Gastrocnemius medialis (tissue), 4 donors: ENCODE measurements at regions of chr22 and their contacts with region 1.

Region 1: DNA sequence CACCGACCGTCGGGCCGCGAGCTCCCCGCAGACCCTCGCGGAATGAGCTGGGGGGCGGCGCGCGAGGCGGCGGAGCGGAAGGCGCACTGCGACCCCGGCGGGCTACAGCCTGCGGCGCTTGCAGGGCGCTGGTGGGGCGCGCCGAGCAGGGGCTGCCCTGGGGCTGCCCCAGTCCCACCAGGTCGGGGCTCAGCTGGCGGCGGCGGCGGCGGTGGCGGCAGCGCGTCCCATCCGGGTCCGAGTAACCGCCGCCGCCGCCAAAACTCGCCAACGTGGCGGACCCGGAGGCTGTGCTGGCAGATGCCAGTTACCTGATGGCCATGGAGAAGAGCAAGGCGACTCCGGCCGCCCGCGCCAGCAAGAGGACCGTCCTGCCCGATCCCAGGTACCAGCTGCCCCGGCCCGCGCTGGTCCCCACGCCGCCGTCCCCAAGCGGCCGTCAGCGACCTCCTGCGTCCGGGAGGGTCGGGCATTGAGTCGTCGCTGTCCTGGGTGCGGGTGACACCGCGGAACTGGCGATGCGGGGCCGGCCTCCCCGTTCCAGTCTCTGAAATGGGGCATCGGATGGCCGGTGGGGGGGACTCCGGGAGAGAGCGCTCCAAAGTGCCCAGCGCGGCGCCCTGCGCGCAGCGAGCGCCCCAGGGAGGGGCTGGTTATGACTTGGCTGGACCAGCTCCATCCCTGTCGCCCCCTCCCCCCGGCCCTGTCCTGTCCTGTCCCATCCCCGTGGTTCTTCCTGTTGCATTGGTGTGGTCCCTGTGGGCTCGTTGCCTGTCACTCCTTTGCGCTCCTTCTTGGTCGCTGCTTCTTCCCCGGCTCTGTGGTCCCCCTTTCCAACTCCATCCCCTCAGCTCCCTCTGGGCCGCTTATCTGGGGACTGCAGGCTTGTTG is 63.5 kb downstream of the CRYBB2 start:
- DNase-seq: no peak
- ATAC-seq: no peak
- H3K4me3 ChIP-seq: no peak overlapping the region
- H3K27ac ChIP-seq: no peak overlapping the region
- H3K4me1 ChIP-seq: no peaks in the 10 kb centered on the region
- H3K27me3 ChIP-seq: peaks cover 31 to 41% (median 38%) of the 10 kb centered on the region in 3 donors
- CTCF ChIP-seq: no peak
- POLR2A ChIP-seq: no peak

Region 2: DNA sequence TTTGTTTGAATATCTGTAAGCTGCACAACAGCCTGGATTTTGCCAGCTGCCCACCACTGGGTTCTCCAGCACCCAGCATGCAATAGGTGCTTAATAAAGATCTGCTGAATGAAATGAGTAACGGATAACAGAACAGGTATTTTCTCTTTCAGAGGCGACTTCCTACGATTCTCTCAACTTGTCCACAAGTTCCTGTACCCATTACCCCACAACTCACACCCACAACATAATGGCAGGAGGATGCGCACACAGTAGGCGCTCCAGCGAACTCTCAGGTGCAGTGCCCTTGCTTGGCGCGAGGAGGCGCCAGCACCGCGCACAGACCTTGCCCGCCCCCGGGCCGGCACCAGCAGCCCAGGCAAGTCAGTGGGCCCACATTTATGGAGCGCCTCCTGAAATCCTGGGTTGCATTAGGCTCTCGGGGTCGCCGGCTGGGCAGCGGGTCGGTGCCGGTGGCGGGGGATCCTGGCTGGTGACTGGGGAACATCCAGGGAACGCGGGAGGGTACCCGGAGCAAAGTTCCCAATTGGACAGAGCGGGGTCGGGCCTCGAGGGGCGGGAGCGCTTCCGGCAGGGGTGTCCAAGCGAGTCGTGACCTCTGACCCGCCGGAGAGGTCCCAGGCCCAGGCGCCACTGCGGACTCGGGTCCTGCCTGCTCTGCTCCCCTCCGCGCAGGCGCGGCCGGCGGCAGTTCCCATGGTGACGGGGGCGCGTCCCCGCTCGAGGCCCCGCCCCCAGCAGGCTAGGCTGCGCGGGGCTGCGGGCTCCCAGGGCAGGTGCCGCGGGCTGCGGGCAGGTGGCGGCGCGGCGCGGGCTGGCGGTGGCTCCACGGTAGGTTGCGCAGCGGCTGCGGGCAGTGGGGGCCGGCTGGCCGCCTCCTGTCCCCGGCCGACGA is 330.7 kb before region 1 on chr22 and contains the start of gene KIAA1671:
- in situ Hi-C with region 1: no loop called
- intact Hi-C with region 1: no loop called
- DNase-seq: peak; percentile 57 to 70
- ATAC-seq: peak; percentile 90 to 91
- H3K4me3 ChIP-seq: peak within 1 kb of the TSS; percentile 66 to 82 (median 78)
- H3K27ac ChIP-seq: peak within 1 kb of the TSS; percentile 52 to 75 (median 64)
- H3K4me1 ChIP-seq: peaks cover 13 to 18% of the 10 kb centered on the region in 2 donors
- H3K27me3 ChIP-seq: peaks cover 10 to 32% (median 14%) of the 10 kb centered on the region in 3 donors
- CTCF ChIP-seq: peak; percentile 86 to 95 (median 92)
- POLR2A ChIP-seq: peak; percentile 31 to 54
- total RNA-seq, gene KIAA1671: 16.2 to 35.0 (median 21.7) TPM

Region 3: GRCh38 chr22:25172153-25172552 is 110.8 kb before region 1 on chr22:
- in situ Hi-C with region 1: no loop called
- intact Hi-C with region 1: no loop called
- DNase-seq: peak in 1 of 2 donors; percentile 66
- ATAC-seq: peak; percentile 61 to 69
- H3K4me3 ChIP-seq: no peak overlapping the region
- H3K27ac ChIP-seq: no peak overlapping the region
- H3K4me1 ChIP-seq: no peaks in the 10 kb centered on the region
- H3K27me3 ChIP-seq: no peaks in the 10 kb centered on the region
- CTCF ChIP-seq: peak; percentile 63 to 77 (median 68)
- POLR2A ChIP-seq: no peak

Region 4: DNA sequence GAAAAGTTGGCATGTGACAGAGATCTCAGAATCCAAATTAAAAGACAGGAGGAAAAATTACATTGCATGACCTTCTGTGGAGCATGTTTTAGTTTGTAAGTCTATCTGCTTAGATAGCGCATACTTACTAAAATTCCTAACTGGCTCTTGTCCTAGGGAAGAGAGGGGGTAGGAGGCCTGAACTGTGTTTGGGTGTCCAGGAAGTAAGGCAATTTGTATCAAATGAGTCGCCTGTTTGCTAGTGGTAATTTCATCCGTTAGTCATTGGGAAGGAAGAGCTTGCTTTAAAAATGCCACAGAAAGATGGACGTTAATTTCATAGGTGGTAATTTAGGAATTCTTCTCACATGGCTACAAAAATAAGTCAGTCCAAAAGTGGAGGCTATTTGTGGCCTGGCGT is 300.0 kb after region 1 on chr22:
- in situ Hi-C with region 1: loop called in 1 of 4 experiments (anchors 25 kb)
- intact Hi-C with region 1: no loop called
- DNase-seq: no peak
- ATAC-seq: no peak
- H3K4me3 ChIP-seq: no peak overlapping the region
- H3K27ac ChIP-seq: no peak overlapping the region
- H3K4me1 ChIP-seq: no peaks in the 10 kb centered on the region
- H3K27me3 ChIP-seq: no peaks in the 10 kb centered on the region
- CTCF ChIP-seq: no peak
- POLR2A ChIP-seq: no peak